HepG2 (cell line): ENCODE measurements at regions of chr17 and their contacts with region 1.

Region 1: DNA sequence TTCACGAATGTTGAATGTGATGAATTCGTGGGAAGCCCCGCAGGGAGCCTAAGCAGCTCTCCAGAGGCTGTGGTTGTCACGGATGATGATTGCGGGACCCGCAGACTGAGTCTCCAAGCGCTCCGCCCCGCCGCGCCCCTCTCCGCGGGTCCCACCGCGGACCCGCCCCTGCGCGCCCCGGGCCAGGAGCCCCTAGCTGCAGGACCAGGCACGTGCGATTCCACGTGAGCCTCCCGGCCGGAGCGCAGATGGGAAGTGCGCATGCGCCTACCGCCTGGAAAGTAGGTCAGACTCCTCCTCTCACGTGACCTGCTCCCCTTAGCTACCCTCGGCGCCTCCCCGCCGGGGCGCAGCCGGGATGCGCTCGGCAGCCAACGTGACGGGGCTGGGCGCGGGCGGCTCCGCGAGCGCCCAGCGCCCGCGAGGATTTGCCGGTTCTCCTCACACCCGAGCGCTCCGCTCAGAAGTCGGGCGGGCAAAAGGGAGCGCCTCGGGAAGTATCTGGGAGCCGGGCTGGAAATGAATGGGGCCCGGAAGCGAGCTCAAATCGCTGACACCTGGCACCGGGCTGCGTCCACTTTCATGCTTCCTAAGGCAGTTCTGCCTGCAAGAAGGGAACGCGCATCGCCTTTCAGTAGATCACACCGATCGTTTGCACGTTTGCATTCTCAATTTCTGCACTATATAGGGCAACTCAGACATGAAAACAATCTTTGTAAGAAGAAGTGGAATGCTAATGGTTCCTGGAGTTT is 26.4 kb upstream of the HLF start:
- DNase-seq: peak; percentile 94
- ATAC-seq: peak; percentile 99
- H3K4me3 ChIP-seq: peak overlapping the region; percentile 61 to 77 (median 70)
- H3K27ac ChIP-seq: peak overlapping the region; percentile 72
- H3K4me1 ChIP-seq: peaks cover 23% of the 10 kb centered on the region
- H3K27me3 ChIP-seq: no peaks in the 10 kb centered on the region; a peak in 1 of 5 replicates
- CTCF ChIP-seq: peak; percentile 22; the same call in 1 of the 2 replicates
- EP300 ChIP-seq: peak in 1 of 2 experiments; percentile 30; a peak in 2 of 4 replicates
- POLR2A ChIP-seq: peak; percentile 66
- RAD21 ChIP-seq: peak; percentile 26

Region 2: GRCh38 chr17:55067697-55068439 is 170.5 kb before region 1 on chr17:
- CTCF ChIA-PET with region 1: no interaction called
- POLR2A ChIA-PET with region 1: interaction called, 3 read pairs
- in situ Hi-C with region 1: no loop called
- intact Hi-C with region 1: loop called (anchors 5 kb)
- DNase-seq: peak; percentile 9
- ATAC-seq: no peak
- H3K4me3 ChIP-seq: peak overlapping the region in 1 of 3 experiments; percentile 15; a peak in 1 of 6 replicates
- H3K27ac ChIP-seq: peak overlapping the region; percentile 93
- H3K4me1 ChIP-seq: peaks cover 33% of the 10 kb centered on the region
- H3K27me3 ChIP-seq: no peaks in the 10 kb centered on the region
- CTCF ChIP-seq: no peak
- EP300 ChIP-seq: no peak
- POLR2A ChIP-seq: no peak
- RAD21 ChIP-seq: no peak

Region 3: GRCh38 chr17:55273579-55274354 is 35.4 kb after region 1 on chr17:
- CTCF ChIA-PET with region 1: no interaction called
- POLR2A ChIA-PET with region 1: interaction called, 64 read pairs
- in situ Hi-C with region 1: no loop called
- intact Hi-C with region 1: no loop called
- DNase-seq: no peak
- ATAC-seq: peak; percentile 46
- H3K4me3 ChIP-seq: peak overlapping the region; percentile 81 to 93 (median 83)
- H3K27ac ChIP-seq: peak overlapping the region; percentile 84
- H3K4me1 ChIP-seq: peaks cover 72% of the 10 kb centered on the region
- H3K27me3 ChIP-seq: peaks cover 0 to 3% of the 10 kb centered on the region in 2 experiments; a peak in 1 of 5 replicates
- CTCF ChIP-seq: 0 out of 2 replicates have a peak, but pooled peaks have one; percentile 6
- EP300 ChIP-seq: no peak
- POLR2A ChIP-seq: peak in 1 of 2 experiments; percentile 48; a peak in 1 of 4 replicates
- RAD21 ChIP-seq: 0 out of 2 replicates have a peak, but pooled peaks have one; percentile 14

Region 4: GRCh38 chr17:55303701-55304145 is 65.4 kb after region 1 on chr17:
- CTCF ChIA-PET with region 1: no interaction called
- POLR2A ChIA-PET with region 1: interaction called, 6 read pairs
- in situ Hi-C with region 1: no loop called
- intact Hi-C with region 1: loop called (anchors 2 kb)
- DNase-seq: no peak
- ATAC-seq: no peak
- H3K4me3 ChIP-seq: no peak overlapping the region; a peak in 1 of 6 replicates
- H3K27ac ChIP-seq: peak overlapping the region; percentile 86
- H3K4me1 ChIP-seq: peaks cover 100% of the 10 kb centered on the region
- H3K27me3 ChIP-seq: no peaks in the 10 kb centered on the region
- CTCF ChIP-seq: peak; percentile 4; the same call in 1 of the 2 replicates
- EP300 ChIP-seq: no peak
- POLR2A ChIP-seq: no peak; a peak in 2 of 4 replicates
- RAD21 ChIP-seq: no peak